Right ventricle myocardium inferior (tissue), 1 donor: ENCODE measurements at regions of chr1 and their contacts with region 1.

Region 1: GRCh38 chr1:15741183-15741850 is 982 bp upstream of the TMEM82 start:
- DNase-seq: peak; percentile 86
- ATAC-seq: peak; percentile 80

Region 2: DNA sequence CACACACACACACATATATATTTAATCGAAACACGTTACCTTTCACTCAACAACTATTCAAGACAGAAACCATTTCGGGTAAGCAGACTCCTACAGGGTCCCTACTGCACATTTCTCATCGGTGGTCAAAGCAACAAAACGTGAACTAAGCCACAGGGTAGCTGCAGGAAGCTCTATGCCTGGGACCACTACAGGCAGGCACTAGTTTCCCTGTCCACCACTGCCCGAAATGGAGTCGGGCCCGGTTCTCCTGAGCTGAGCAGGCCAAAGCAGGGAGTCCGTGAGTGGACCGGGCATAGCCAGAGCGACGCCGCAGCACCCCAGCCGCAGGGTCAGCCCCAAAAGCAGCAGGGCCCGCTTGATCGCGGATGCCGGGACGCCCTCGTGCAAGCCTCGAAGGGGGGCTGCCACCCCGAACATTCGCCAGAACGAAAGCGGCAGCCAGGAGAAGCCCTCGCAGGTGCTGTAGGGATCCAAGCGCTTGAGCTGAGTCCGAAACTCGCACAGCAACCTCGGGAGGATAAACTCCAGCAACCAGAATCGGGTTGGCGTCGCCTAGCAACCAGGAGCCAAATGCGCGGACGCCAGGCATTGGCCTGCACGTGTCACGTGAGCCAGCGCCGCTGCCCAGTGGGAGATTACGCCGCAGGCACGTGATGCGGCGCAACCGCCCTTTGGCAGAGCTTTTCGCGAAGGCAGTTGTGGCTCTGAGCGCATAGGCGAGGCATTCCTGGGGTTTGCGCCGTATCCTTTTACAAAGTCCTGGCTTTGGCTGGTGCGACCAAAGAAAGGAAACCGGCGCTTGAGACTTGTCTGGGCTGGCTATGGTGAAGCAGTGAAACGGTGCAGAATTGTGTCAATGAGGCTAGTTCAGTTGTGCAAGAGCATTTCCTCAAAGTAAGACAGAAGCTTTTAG is 138.0 kb before region 1 on chr1:
- intact Hi-C with region 1: loop called (anchors 5 kb)
- DNase-seq: peak; percentile 100
- ATAC-seq: peak; percentile 98

Region 3: DNA sequence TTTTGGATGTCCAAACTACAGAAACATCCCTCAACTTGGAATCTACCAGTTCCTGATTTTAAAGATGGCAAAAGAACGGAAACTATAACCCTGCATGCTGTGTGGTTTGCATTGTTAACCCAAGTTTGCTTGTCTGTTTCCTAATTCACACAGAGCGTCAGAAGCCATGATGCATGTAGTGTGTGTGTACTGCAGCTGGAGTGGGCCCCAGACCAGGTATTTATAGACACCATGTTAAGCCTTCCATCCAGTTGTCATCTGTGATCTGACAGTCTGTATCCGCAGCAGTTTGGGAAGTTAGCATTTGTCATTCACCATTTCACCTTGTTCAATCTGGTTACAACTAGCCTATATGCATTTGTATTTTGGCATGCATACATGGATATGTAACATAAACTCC is 84.9 kb before region 1 on chr1:
- intact Hi-C with region 1: loop called (anchors 5 kb)
- DNase-seq: no peak
- ATAC-seq: peak; percentile 72